ENCODE measurements at regions of chr3 and their contacts with region 1.

Region 1: DNA sequence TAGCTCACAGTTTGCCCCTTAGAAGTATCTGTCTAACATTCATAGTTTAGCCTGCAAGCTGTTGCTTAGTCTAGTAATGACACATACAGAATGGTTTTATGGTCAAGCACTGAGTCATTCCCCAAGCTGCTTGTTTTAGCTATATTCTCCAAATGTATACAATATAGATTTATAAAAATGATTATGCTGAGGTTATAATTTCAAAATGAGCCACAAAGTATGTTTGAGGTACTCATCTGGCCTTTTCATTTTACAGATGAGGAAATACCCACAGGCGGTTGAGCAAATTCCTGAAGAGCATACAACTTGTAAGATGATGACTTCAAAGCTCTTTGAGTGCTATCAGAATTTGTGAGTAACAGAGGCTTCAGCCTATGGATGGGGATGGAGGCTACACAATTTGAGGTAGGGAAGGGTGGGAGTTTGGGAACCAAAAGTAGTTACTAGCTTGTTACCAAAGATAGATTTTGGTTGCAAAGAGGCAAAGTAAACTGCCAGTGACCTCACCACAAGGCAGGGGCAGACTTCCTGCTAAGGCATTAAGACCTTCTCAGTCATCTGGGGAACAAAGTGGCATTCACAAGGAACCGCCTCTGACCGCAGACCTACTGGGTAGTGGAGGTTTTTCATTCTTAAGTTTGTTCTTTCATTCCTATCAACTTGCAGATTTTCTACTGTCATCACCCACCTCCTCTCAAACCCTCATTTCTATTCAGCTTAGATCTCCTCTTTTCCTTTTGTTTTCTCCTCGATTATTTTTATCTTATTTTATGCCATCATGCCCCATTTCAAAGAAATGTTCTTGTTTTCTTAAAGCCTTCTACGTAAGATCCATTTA is 257.2 kb upstream of the NECTIN3 start:
- DNase-seq: peak; percentile 93
- ATAC-seq: peak; percentile 90
- H3K4me3 ChIP-seq: peak overlapping the region in 1 of 2 experiments; percentile 21; a peak in 3 of 4 replicates
- H3K27ac ChIP-seq: peak overlapping the region; percentile 91
- H3K4me1 ChIP-seq: peaks cover 47 to 53% of the 10 kb centered on the region in 2 experiments
- H3K27me3 ChIP-seq: no peaks in the 10 kb centered on the region
- CTCF ChIP-seq: no peak
- POLR2A ChIP-seq: no peak
- RAD21 ChIP-seq: no peak

Region 2: GRCh38 chr3:110139048-110139447 is 675.3 kb before region 1 on chr3:
- CTCF ChIA-PET with region 1: no interaction called
- POLR2A ChIA-PET with region 1: no interaction called
- RAD21 ChIA-PET with region 1: no interaction called
- intact Hi-C with region 1: no loop called
- DNase-seq: no peak
- ATAC-seq: no peak
- H3K4me3 ChIP-seq: no peak overlapping the region
- H3K27ac ChIP-seq: no peak overlapping the region
- H3K4me1 ChIP-seq: peaks cover 0 to 6% of the 10 kb centered on the region in 2 experiments; a peak in 1 of 4 replicates
- H3K27me3 ChIP-seq: no peaks in the 10 kb centered on the region
- CTCF ChIP-seq: no peak
- POLR2A ChIP-seq: no peak
- RAD21 ChIP-seq: no peak

Region 3: GRCh38 chr3:110234831-110235230 is 579.6 kb before region 1 on chr3:
- CTCF ChIA-PET with region 1: no interaction called
- POLR2A ChIA-PET with region 1: no interaction called
- RAD21 ChIA-PET with region 1: no interaction called
- intact Hi-C with region 1: no loop called
- DNase-seq: no peak
- ATAC-seq: no peak
- H3K4me3 ChIP-seq: no peak overlapping the region
- H3K27ac ChIP-seq: no peak overlapping the region
- H3K4me1 ChIP-seq: no peaks in the 10 kb centered on the region
- H3K27me3 ChIP-seq: no peaks in the 10 kb centered on the region
- CTCF ChIP-seq: no peak
- POLR2A ChIP-seq: no peak
- RAD21 ChIP-seq: no peak

Region 4: GRCh38 chr3:110413807-110414748 is 400.3 kb before region 1 on chr3:
- CTCF ChIA-PET with region 1: no interaction called
- POLR2A ChIA-PET with region 1: no interaction called
- RAD21 ChIA-PET with region 1: no interaction called
- intact Hi-C with region 1: loop called (anchors 10 kb)
- DNase-seq: no peak
- ATAC-seq: peak; percentile 52; the same call in 1 of the 2 replicates
- H3K4me3 ChIP-seq: no peak overlapping the region
- H3K27ac ChIP-seq: peak overlapping the region; percentile 85
- H3K4me1 ChIP-seq: peaks cover 28 to 41% of the 10 kb centered on the region in 2 experiments
- H3K27me3 ChIP-seq: no peaks in the 10 kb centered on the region
- CTCF ChIP-seq: no peak
- POLR2A ChIP-seq: no peak
- RAD21 ChIP-seq: no peak

Region 5: DNA sequence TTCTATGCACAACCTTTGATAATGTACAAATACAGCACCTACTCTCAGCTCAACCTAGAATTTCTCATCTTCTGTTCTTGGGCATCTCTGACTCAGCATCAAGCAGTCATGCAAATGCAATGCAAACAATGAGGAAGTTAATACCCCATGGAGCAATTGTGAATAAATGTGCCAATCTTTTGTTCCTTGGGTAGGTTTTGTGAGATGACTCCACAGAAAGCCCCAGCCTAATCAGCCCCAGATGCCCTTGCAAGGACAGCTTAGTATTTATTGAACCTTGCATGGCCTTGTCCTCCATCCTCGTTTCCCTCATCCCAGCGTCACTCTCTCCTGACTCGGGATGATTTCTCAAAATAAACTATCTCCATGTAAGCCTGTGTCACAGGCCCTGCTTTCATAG is 237.4 kb before region 1 on chr3:
- CTCF ChIA-PET with region 1: no interaction called
- POLR2A ChIA-PET with region 1: no interaction called
- RAD21 ChIA-PET with region 1: no interaction called
- intact Hi-C with region 1: loop called (anchors 10 kb)
- DNase-seq: peak; percentile 80
- ATAC-seq: peak; percentile 75
- H3K4me3 ChIP-seq: peak overlapping the region in 1 of 2 experiments; percentile 16; a peak in 1 of 4 replicates
- H3K27ac ChIP-seq: peak overlapping the region; percentile 90
- H3K4me1 ChIP-seq: peaks cover 58 to 71% of the 10 kb centered on the region in 2 experiments
- H3K27me3 ChIP-seq: no peaks in the 10 kb centered on the region
- CTCF ChIP-seq: no peak
- POLR2A ChIP-seq: no peak
- RAD21 ChIP-seq: peak; percentile 30

Region 6: GRCh38 chr3:110799271-110799670 is 15.1 kb before region 1 on chr3:
- CTCF ChIA-PET with region 1: no interaction called
- POLR2A ChIA-PET with region 1: no interaction called
- RAD21 ChIA-PET with region 1: no interaction called
- intact Hi-C with region 1: no loop called
- DNase-seq: no peak
- ATAC-seq: no peak
- H3K4me3 ChIP-seq: no peak overlapping the region
- H3K27ac ChIP-seq: no peak overlapping the region
- H3K4me1 ChIP-seq: no peaks in the 10 kb centered on the region
- H3K27me3 ChIP-seq: no peaks in the 10 kb centered on the region
- CTCF ChIP-seq: no peak
- POLR2A ChIP-seq: no peak
- RAD21 ChIP-seq: no peak

Measured in HCT116 (cell line).